PC-3 (cell line): ENCODE measurements at regions of chr18 and their contacts with region 1.

Region 1: GRCh38 chr18:41532344-41533086 is 422.5 kb upstream of the PIK3C3 start:
- DNase-seq: peak; percentile 57
- ATAC-seq: peak; percentile 74
- H3K4me3 ChIP-seq: no peak overlapping the region
- H3K27ac ChIP-seq: no peak overlapping the region
- H3K4me1 ChIP-seq: peaks cover 12% of the 10 kb centered on the region; the same call in 1 of the 2 replicates
- H3K27me3 ChIP-seq: no peaks in the 10 kb centered on the region
- CTCF ChIP-seq: peak; percentile 53

Region 2: DNA sequence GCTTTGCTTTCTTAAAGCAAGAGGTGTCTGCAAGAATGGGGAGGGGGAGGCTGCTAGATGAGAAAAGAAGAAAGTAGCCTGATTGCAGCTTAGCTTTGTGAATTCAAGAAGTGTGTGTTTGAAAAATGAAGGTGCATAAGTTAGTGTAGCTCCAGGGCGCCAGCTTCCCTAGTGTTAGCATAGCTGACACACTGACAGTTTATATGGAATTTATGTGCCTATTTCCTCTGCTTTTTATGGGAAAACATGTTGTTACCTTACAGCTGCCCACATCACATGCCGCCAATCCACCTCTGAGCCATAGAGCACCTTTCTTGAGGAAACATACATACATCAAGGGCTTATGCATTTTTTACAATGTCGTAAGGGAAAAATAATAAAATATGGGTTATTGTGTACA is 113.9 kb before region 1 on chr18:
- CTCF ChIA-PET with region 1: no interaction called
- POLR2A ChIA-PET with region 1: no interaction called
- intact Hi-C with region 1: no loop called
- DNase-seq: peak; percentile 17
- ATAC-seq: peak; percentile 64
- H3K4me3 ChIP-seq: no peak overlapping the region
- H3K27ac ChIP-seq: no peak overlapping the region
- H3K4me1 ChIP-seq: peaks cover 12% of the 10 kb centered on the region; the same call in 1 of the 2 replicates
- H3K27me3 ChIP-seq: no peaks in the 10 kb centered on the region
- CTCF ChIP-seq: no peak

Region 3: DNA sequence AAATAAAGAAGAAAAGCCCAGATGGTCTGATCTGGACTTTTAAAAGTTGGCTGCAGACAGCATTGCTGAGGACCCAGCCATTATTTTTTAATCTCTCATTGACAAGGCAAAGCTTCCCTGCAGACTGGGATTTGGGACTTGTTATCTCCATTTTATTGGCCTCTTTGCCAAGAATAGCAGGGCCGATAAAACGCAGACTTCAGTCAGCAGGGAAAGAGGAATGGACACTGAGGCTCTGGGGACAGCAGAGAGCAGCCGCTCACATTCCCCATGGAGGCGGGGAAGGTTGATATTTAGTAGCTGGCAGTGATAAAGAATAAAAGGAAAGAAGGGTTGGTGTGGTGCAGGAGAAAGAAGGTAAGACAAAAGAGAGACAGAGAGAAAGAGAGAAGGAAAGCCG is 72.4 kb after region 1 on chr18:
- CTCF ChIA-PET with region 1: no interaction called
- POLR2A ChIA-PET with region 1: no interaction called
- intact Hi-C with region 1: no loop called
- DNase-seq: no peak
- ATAC-seq: no peak
- H3K4me3 ChIP-seq: no peak overlapping the region
- H3K27ac ChIP-seq: no peak overlapping the region
- H3K4me1 ChIP-seq: no peaks in the 10 kb centered on the region
- H3K27me3 ChIP-seq: no peaks in the 10 kb centered on the region
- CTCF ChIP-seq: no peak

Region 4: DNA sequence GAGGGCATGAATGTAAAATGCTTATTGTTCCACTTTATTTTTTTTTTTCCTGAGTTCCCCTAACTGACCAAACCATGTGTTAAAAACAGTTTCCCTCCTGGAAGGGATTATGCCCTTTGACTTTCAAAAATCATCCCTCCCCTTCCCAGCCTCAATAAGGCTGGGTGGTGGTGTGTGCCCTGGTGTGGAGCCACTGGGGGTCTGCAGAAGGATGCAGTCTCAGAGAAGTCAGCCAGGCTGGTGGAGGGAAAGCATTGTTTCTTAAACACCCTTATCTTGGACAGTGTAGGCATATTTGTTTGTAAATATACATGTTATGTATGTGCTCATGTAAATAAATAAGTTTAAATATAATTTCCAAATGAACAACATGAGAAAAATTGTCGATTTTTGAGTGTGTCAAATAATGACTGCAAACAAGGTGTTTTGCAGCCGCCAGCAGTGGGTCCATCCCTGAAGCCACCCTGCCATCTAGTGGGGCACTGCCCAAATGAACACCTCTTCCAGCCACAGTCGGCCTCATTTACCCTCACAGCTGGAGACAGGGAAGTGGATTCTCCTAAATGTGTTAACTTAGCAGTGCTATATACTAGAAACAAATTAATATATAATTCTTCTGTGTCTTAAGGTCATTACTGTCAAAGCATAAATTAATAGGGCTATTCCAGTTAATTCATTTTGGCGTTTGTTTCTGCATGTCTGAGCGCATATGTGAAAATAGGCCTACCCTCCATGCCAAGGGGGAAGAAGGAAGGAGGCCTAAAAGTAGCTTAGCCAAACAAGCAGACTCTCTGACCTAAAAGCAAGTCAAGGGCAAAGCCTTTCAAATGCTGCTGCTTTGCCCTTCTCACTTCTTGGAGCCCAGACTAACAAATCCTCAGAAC is 212.9 kb after region 1 on chr18:
- CTCF ChIA-PET with region 1: no interaction called
- POLR2A ChIA-PET with region 1: no interaction called
- intact Hi-C with region 1: loop called (anchors 2 kb)
- DNase-seq: peak; percentile 57
- ATAC-seq: peak; percentile 93
- H3K4me3 ChIP-seq: no peak overlapping the region
- H3K27ac ChIP-seq: no peak overlapping the region
- H3K4me1 ChIP-seq: peaks cover 10% of the 10 kb centered on the region; the same call in 1 of the 2 replicates
- H3K27me3 ChIP-seq: no peaks in the 10 kb centered on the region
- CTCF ChIP-seq: peak; percentile 65